Calu3 (cell line): ENCODE measurements at regions of chr1 and their contacts with region 1.

Region 1: GRCh38 chr1:236925386-236925785 is 78.9 kb downstream of the MT1HL1 start:
- DNase-seq: no peak
- H3K4me3 Mint-ChIP-seq: no peak overlapping the region
- H3K27ac Mint-ChIP-seq: no peak overlapping the region
- H3K4me1 Mint-ChIP-seq: no peaks in the 10 kb centered on the region
- H3K27me3 Mint-ChIP-seq: no peaks in the 10 kb centered on the region
- CTCF ChIP-seq: no peak

Region 2: DNA sequence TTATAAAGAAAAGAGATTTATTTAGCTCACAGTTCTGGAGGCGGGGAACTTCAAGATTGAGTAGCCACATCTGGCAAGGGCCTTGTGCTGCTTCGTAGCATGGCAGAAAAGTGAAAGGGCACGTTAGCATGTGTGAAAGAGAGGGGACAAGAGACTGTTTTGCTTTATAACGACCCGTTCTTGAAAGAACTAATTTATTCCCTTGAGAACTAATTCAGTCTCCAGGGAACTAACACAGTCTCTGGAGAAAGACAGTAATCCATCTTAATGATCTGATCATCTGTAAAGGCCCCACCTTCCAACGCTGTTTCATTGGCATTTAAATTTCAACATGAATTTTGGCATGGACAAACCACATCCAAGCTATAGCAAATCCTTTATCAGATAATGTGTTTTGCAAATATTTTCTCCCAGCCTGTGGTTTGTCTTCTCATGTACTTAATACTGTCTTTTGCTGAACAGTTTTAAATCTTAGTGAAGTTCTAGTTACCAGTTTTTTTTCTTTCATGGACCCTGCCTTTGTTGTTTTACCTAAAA is 104.2 kb before region 1 on chr1:
- CTCF ChIA-PET with region 1: no interaction called
- intact Hi-C with region 1: no loop called
- DNase-seq: no peak
- H3K4me3 Mint-ChIP-seq: no peak overlapping the region
- H3K27ac Mint-ChIP-seq: no peak overlapping the region
- H3K4me1 Mint-ChIP-seq: no peaks in the 10 kb centered on the region
- H3K27me3 Mint-ChIP-seq: no peaks in the 10 kb centered on the region
- CTCF ChIP-seq: no peak

Region 3: GRCh38 chr1:237098541-237098940 is 173.2 kb after region 1 on chr1:
- CTCF ChIA-PET with region 1: interaction called, 10 read pairs
- intact Hi-C with region 1: no loop called
- DNase-seq: no peak
- H3K4me3 Mint-ChIP-seq: no peak overlapping the region
- H3K27ac Mint-ChIP-seq: no peak overlapping the region
- H3K4me1 Mint-ChIP-seq: no peaks in the 10 kb centered on the region
- H3K27me3 Mint-ChIP-seq: no peaks in the 10 kb centered on the region
- CTCF ChIP-seq: no peak